Panc1 (cell line): ENCODE measurements at regions of chr12 and their contacts with region 1.

Region 1: DNA sequence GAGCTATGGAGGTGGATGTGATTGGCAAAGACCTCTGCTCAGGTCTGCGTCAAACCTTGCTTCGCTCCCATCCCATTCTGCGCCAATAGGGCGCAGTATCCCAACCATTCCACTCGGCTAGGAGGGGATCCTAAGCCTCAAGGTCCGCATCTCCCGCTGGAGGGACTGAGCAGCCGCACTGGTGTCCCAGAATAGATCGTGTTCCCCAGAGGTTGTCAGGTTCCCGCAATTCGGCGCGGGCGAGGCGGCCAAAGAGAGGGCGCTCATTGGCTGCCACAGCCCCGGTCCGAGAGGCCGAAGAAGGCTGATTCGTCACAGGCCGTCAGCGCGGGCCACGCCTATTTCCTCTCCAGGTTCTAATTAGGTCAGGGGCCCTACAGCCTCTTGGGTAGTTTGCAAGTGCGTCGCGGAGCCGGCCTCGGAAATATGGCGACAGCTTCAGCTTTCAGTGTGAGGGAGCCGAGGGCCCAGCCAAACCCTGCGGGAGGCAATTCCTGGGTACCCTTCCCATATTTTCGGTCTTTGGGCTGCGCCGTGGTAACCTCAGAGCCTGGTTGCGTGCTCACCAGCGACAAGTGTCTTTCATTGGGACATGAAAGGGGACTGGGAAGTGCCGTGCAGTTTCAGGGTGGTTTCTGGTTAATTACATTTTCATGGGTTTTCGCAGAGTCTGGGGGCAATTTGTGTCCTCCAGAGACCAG is 5.0 kb downstream of the OR10AD1 start:
- DNase-seq: peak; percentile 83
- ATAC-seq: peak; percentile 99
- H3K4me3 ChIP-seq: peak overlapping the region; percentile 85 to 93
- H3K27ac ChIP-seq: peak overlapping the region; percentile 95
- H3K4me1 ChIP-seq: peaks cover 19% of the 10 kb centered on the region
- H3K27me3 ChIP-seq: peaks cover 3% of the 10 kb centered on the region; the same call in 1 of the 2 replicates
- CTCF ChIP-seq: no peak; the same call in 1 of the 2 replicates

Region 2: DNA sequence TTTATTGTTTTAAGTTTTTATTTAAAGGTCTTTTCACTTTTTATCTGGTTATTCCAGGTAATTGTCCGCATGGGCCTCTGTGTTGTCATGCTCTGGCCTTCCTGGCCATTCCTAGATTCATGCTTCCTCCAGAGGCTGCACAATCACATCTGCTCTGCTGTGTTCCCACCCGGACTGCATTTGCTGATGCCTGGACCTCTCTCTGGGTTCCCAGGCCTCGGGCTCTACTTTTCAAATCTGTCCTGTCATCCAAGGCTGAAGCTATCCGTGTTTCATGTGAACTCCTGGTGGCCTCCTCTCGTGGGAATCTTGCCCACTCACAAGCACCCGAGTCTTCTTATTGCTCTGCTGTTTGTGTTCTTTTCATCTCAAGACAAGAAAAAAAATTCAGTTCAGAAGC is 277.2 kb before region 1 on chr12:
- CTCF ChIA-PET with region 1: no interaction called
- POLR2A ChIA-PET with region 1: no interaction called
- in situ Hi-C with region 1: no loop called
- intact Hi-C with region 1: no loop called
- DNase-seq: no peak
- ATAC-seq: no peak
- H3K4me3 ChIP-seq: no peak overlapping the region
- H3K27ac ChIP-seq: no peak overlapping the region
- H3K4me1 ChIP-seq: no peaks in the 10 kb centered on the region
- H3K27me3 ChIP-seq: peaks cover 28% of the 10 kb centered on the region
- CTCF ChIP-seq: no peak

Region 3: GRCh38 chr12:48157018-48157888 is 40.9 kb before region 1 on chr12 and contains the start of gene ASB8:
- CTCF ChIA-PET with region 1: no interaction called
- POLR2A ChIA-PET with region 1: no interaction called
- in situ Hi-C with region 1: no loop called
- intact Hi-C with region 1: no loop called
- DNase-seq: peak; percentile 98
- ATAC-seq: peak; percentile 99
- H3K4me3 ChIP-seq: peak within 1 kb of the TSS; percentile 98
- H3K27ac ChIP-seq: peak within 1 kb of the TSS; percentile 94
- H3K4me1 ChIP-seq: peaks cover 10% of the 10 kb centered on the region; the same call in 1 of the 2 replicates
- H3K27me3 ChIP-seq: no peaks in the 10 kb centered on the region
- CTCF ChIP-seq: peak; percentile 70
- total RNA-seq, gene ASB8: 17.1 TPM

Region 4: GRCh38 chr12:48331389-48331788 is 133.3 kb after region 1 on chr12:
- CTCF ChIA-PET with region 1: no interaction called
- POLR2A ChIA-PET with region 1: interaction called, 10 read pairs
- in situ Hi-C with region 1: no loop called
- intact Hi-C with region 1: no loop called
- DNase-seq: no peak
- ATAC-seq: no peak
- H3K4me3 ChIP-seq: no peak overlapping the region
- H3K27ac ChIP-seq: no peak overlapping the region
- H3K4me1 ChIP-seq: no peaks in the 10 kb centered on the region
- H3K27me3 ChIP-seq: no peaks in the 10 kb centered on the region
- CTCF ChIP-seq: no peak

Region 5: GRCh38 chr12:48366131-48366530 is 168.0 kb after region 1 on chr12:
- CTCF ChIA-PET with region 1: no interaction called
- POLR2A ChIA-PET with region 1: interaction called, 10 read pairs
- in situ Hi-C with region 1: no loop called
- intact Hi-C with region 1: no loop called
- DNase-seq: no peak
- ATAC-seq: no peak
- H3K4me3 ChIP-seq: no peak overlapping the region
- H3K27ac ChIP-seq: no peak overlapping the region
- H3K4me1 ChIP-seq: no peaks in the 10 kb centered on the region
- H3K27me3 ChIP-seq: peaks cover 10% of the 10 kb centered on the region
- CTCF ChIP-seq: no peak

Region 6: DNA sequence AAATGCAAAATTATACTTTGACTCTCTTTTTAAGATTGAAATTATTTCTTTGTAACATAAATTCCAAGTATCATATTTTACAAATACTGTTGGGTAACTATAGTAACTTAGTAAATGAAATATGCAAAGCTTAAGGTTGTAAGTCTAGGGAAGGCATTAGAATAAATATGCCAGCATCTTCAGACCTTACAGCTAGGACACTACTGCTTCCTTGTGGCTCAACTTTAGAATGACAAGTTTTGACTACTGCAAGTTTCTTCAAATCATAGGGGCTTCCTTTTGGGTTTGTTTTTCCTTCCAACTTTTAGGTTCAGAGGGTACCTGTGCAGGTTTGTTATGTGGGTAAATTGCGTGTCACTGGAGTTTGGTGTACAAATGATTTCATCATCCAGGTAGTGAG is 256.5 kb after region 1 on chr12:
- CTCF ChIA-PET with region 1: interaction called, 4 read pairs
- POLR2A ChIA-PET with region 1: no interaction called
- in situ Hi-C with region 1: no loop called
- intact Hi-C with region 1: loop called (anchors 5 kb)
- DNase-seq: no peak
- ATAC-seq: peak; percentile 71; the same call in 1 of the 2 replicates
- H3K4me3 ChIP-seq: no peak overlapping the region
- H3K27ac ChIP-seq: no peak overlapping the region
- H3K4me1 ChIP-seq: no peaks in the 10 kb centered on the region
- H3K27me3 ChIP-seq: peaks cover 25% of the 10 kb centered on the region
- CTCF ChIP-seq: peak; percentile 61